Esophagus squamous epithelium (tissue), 5 donors: ENCODE measurements at regions of chr22 and their contacts with region 1.

Region 1: DNA sequence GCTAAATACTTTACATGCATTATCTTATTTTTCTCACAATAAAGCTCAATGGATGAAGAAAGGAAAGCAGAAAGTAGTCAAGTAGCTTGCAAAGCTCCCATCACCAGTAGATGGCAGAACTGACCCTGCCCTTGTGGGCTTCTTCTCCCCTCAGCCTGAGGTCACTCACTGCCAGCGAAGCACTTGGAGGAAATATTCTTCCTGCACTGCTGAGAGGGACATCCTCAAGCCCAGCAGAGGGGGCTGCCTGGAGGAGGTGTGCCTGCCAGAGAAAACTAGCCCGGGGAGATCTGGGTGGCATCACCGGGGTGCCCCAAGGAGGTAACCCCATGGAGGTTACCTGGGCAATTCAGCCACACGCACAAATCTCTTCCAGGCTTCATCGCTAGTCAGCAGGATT is 6.6 kb downstream of the APOL4 start:
- DNase-seq: no peak
- H3K4me3 ChIP-seq: no peak overlapping the region
- H3K27ac ChIP-seq: no peak overlapping the region
- H3K4me1 ChIP-seq: peaks cover 0 to 43% (median 10%) of the 10 kb centered on the region in 3 donors
- H3K27me3 ChIP-seq: no peaks in the 10 kb centered on the region
- CTCF ChIP-seq: peak; percentile 62 to 75 (median 70)
- POLR2A ChIP-seq: no peak

Region 2: GRCh38 chr22:36110306-36110881 is 84.6 kb before region 1 on chr22:
- intact Hi-C with region 1: no loop called
- DNase-seq: no peak
- H3K4me3 ChIP-seq: no peak overlapping the region
- H3K27ac ChIP-seq: no peak overlapping the region
- H3K4me1 ChIP-seq: peaks cover 0 to 6% (median 0%) of the 10 kb centered on the region in 3 donors
- H3K27me3 ChIP-seq: no peaks in the 10 kb centered on the region
- CTCF ChIP-seq: no peak
- POLR2A ChIP-seq: no peak

Region 3: GRCh38 chr22:36244522-36245391 is 49.8 kb after region 1 on chr22:
- intact Hi-C with region 1: no loop called
- DNase-seq: no peak
- H3K4me3 ChIP-seq: no peak overlapping the region
- H3K27ac ChIP-seq: peak overlapping the region in 3 of 4 donors; percentile 28 to 65 (median 64)
- H3K4me1 ChIP-seq: peaks cover 0 to 28% (median 16%) of the 10 kb centered on the region in 3 donors
- H3K27me3 ChIP-seq: no peaks in the 10 kb centered on the region
- CTCF ChIP-seq: no peak
- POLR2A ChIP-seq: no peak

Region 4: DNA sequence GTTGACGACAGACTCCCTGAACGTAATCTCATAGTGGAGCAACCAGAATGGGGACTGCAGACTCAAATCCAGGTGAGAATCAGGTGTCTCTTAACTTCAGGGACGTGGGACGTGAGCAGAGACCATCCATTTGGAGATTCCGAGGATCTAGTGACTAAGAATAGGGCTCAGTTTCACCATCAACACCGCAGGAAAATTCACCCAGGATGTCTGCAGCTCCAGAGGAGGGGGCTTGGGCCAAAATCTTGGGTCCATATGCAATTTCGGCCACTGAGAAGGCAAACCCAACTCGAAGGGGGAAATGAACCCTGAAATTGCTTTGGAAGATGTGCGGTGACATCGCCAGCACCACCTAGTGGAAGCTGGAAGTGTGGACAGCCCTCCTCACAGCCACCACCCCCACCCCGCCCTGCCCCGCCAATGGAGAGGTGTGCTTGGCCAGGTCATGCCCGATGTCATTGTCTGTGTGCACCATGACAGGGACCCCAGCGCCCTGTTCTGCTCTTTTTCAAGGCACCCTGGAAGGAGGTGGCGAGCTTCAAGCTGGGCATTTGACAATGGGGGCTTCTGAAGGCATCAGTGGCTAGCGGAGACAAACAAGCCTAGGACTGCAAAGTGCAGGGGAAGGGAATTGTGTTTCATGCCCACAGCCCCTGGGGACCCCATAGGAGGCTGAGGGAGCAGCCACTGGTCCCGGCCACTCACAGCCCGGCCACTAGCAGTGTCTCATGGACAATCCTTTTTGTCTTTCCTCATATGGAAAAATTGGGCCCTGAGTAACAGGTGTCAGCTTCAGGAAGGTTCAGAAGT is 82.7 kb after region 1 on chr22:
- intact Hi-C with region 1: loop called (anchors 10 kb)
- DNase-seq: no peak
- H3K4me3 ChIP-seq: no peak overlapping the region
- H3K27ac ChIP-seq: peak overlapping the region in 2 of 4 donors; percentile 18 to 57
- H3K4me1 ChIP-seq: peaks cover 0 to 17% (median 7%) of the 10 kb centered on the region in 3 donors
- H3K27me3 ChIP-seq: no peaks in the 10 kb centered on the region
- CTCF ChIP-seq: peak; percentile 58 to 84 (median 78)
- POLR2A ChIP-seq: no peak